ENCODE measurements at regions of chr17 and their contacts with region 1.

Region 1: GRCh38 chr17:2844416-2844815 is 48.2 kb downstream of the RAP1GAP2 start:
- DNase-seq: no peak
- H3K4me3 ChIP-seq: no peak overlapping the region
- H3K27me3 ChIP-seq: no peaks in the 10 kb centered on the region
- CTCF ChIP-seq: 0 out of 2 replicates have a peak, but pooled peaks have one; percentile 13

Region 2: DNA sequence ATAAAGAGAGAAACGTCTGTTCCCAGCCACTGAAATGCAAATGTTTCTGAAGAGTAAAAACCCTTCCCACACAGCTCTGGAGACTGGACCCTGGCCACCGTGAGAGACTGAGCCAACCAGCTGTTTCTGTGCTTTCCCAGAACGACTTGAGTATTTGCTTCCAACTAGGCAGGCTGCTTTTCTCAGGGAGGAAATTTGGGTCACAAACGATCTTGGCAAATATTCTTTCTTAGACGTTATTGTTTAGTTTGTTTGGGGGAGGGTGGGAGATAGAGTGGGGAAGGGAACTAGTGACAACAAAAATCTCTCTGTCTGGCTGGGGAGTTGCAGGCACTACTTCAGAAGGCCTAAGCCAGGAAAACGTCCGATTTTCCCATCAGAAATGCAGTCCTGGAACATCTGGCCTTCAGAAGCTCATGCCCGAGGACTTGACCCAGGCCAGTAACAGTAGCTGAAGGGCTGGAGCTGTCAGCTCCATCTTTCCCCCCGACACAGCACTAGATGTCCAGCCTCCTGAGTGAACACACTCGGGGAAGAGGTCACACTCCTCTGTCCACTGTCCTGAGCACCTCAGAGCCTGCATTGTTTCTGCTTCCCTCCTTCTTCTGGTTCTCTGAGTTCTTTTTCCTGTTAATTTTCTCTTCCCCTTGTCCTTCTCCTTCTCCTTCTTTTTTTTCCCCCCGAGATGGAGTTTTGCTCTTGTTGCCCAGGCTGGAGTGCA is 98.9 kb before region 1 on chr17:
- CTCF ChIA-PET with region 1: no interaction called
- POLR2A ChIA-PET with region 1: no interaction called
- DNase-seq: no peak
- H3K4me3 ChIP-seq: no peak overlapping the region
- H3K27me3 ChIP-seq: peaks cover 15% of the 10 kb centered on the region
- CTCF ChIP-seq: no peak

Region 3: GRCh38 chr17:2862197-2862596 is 17.8 kb after region 1 on chr17:
- CTCF ChIA-PET with region 1: interaction called, 13 read pairs
- POLR2A ChIA-PET with region 1: no interaction called
- DNase-seq: no peak
- H3K4me3 ChIP-seq: no peak overlapping the region
- H3K27me3 ChIP-seq: no peaks in the 10 kb centered on the region
- CTCF ChIP-seq: no peak

Region 4: DNA sequence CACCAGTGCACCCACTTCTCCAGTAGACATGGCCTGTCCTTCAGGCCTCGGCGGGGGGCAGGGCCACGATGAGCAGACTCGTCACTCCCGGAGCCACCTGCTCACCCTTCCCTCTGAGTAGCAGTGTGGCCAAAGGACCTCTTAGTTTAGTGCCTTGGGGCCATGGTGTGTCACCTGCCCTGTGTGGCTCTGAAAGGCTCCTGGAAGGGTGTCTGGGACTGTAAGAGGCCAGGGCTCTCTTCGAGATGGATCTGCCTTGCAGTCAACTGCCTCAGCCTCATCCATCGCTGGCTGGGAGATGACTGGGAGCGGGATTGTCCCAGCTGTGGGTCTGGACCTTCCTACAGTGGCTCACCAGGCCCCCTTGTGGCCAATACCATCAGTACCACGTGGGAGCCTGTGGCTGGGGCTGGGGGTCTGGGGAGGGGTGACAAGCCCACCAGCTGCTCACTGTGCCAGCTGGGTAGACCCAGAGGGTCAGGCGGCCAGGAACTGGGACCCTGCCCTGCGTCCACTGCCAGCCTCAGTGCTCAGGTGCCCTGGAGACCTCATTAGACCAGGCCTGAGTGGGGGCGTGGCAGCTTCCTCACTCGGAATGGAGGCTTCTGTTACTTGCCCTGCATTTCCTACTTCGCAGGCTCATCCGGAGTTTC is 85.6 kb after region 1 on chr17:
- CTCF ChIA-PET with region 1: interaction called, 16 read pairs
- POLR2A ChIA-PET with region 1: no interaction called
- DNase-seq: no peak
- H3K4me3 ChIP-seq: no peak overlapping the region
- H3K27me3 ChIP-seq: no peaks in the 10 kb centered on the region
- CTCF ChIP-seq: peak; percentile 79

Region 5: DNA sequence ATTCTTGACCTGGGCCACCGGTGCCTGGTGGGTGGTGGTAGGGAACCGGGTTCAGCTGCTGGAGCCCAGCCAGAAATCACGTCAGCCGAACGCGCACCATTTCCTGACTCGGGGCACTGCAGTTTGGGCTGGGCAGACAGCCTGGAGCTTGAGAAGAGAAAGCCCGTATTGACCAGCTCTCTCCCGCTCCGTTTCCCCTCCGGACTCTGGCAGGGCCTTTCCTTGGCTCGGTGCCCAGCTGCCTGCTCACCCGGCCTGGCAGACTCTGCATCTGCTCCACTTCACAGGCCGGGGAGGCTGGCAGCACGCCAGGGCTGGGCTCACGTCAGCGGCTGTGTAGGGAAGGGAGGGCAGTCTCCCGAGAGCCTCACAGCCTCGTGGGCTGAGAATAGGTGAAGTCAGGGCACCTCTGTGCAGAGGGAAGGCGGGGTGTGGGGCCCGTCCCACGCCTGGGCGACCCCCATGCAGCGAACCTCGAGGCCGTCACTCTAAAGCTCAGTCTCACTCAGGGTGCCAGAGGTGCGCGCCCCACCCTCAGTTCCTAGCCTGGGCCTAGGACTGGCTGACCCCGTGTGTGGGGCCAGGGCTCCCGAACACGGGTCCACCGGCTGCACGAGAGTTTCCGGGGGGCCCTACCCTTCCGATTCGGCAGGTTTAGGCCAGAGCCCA is 159.9 kb after region 1 on chr17:
- CTCF ChIA-PET with region 1: interaction called, 14 read pairs
- POLR2A ChIA-PET with region 1: no interaction called
- DNase-seq: peak; percentile 67
- H3K4me3 ChIP-seq: no peak overlapping the region; the same call in 1 of the 2 replicates
- H3K27me3 ChIP-seq: no peaks in the 10 kb centered on the region
- CTCF ChIP-seq: no peak